Activated CD4-positive, alpha-beta T cell treated with anti-CD3 and anti-CD28 coated beads, Interleukin-2, amount 10 ng/mL, durations not matched to agents 7 days and 5 days (primary cell): ENCODE measurements at regions of chr1 and their contacts with region 1.

Region 1: DNA sequence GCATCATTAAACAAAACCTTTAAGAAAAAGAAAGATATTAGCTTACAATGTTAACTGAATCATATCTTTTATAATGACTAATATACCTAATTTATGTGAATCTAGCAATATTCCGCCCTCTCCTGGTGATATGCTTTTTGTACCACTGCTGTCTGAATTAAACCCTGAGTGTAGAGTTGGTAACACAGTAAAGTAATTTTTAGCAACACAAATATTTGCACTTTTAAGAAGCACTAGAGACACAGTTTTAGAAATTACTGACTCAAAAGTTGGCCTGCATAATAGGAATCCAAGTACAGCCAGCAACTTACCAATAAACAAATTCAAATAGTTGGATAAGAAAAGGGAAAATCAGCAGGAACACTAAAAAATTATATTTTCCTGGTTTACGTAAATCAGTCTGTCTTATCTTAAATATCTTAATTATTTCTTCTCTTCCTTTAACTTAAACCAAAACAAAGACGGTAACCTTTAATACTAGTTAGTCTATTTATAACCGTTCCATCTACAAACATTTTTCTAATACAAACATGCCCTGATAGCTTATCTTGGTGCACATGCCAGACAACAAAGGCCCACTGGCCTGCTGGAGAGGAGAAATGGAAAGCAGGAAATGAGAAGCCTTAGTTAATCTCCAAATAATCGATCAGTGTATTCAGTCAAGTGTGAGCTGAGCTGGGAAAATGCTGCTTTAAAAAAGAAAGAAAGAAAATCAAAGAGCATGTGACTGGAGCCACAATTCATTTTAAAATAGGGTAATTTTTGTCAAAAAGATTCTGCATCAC is 246.0 kb downstream of the RERE start:
- DNase-seq: no peak
- H3K4me3 Mint-ChIP-seq: no peak overlapping the region
- H3K27ac Mint-ChIP-seq: no peak overlapping the region
- H3K4me1 Mint-ChIP-seq: peaks cover 7% of the 10 kb centered on the region
- H3K27me3 Mint-ChIP-seq: no peaks in the 10 kb centered on the region

Region 2: GRCh38 chr1:8560611-8561544 is 10.5 kb before region 1 on chr1:
- CTCF ChIA-PET with region 1: interaction called, 14 read pairs
- POLR2A ChIA-PET with region 1: no interaction called
- DNase-seq: peak; percentile 59
- H3K4me3 Mint-ChIP-seq: no peak overlapping the region
- H3K27ac Mint-ChIP-seq: peak overlapping the region; percentile 51
- H3K4me1 Mint-ChIP-seq: peaks cover 29% of the 10 kb centered on the region
- H3K27me3 Mint-ChIP-seq: no peaks in the 10 kb centered on the region

Region 3: GRCh38 chr1:8598060-8598724 is 26.8 kb after region 1 on chr1:
- CTCF ChIA-PET with region 1: no interaction called
- POLR2A ChIA-PET with region 1: no interaction called
- DNase-seq: no peak
- H3K4me3 Mint-ChIP-seq: no peak overlapping the region
- H3K27ac Mint-ChIP-seq: no peak overlapping the region
- H3K4me1 Mint-ChIP-seq: peaks cover 49% of the 10 kb centered on the region
- H3K27me3 Mint-ChIP-seq: no peaks in the 10 kb centered on the region